Head of caudate nucleus (tissue), 42 donors: ENCODE measurements at regions of chr14 and their contacts with region 1.

Region 1: DNA sequence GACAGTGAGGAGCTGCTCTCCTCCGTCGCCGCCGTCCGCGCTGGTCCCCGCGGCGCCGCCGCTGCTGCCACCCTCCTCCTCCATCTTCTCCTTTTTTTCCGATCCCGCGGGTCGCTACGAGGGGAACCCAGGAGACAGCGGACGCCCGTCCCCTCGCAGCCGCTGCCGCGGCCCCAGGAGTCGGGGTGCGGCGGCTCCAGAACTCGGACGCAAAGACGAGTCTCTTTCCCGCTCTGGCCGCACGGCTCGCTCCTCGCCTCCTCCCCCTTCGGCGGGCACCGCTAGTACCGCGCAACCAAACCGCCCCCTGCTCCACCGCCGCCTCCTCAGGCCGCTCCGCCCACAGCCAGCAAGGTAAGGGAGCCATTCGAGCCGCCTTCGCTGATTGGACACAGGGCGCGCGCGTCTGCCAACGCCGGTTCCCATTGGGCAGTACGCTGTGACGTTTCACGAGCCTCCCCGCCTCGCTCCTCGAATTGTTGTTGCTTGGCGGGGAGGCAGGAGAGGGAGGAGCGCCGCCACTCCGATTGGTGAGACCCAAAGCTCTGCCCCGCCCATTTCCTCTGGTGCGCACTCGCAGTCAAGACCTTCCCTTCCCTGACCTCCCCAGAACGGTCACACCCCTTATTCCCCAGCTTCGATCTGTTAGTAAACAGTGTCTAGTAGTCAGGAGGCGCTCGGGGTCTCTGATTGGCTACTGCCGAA is at the start of gene RPS6KA5:
- DNase-seq: peak; percentile 99 to 100 (median 100)

Region 2: DNA sequence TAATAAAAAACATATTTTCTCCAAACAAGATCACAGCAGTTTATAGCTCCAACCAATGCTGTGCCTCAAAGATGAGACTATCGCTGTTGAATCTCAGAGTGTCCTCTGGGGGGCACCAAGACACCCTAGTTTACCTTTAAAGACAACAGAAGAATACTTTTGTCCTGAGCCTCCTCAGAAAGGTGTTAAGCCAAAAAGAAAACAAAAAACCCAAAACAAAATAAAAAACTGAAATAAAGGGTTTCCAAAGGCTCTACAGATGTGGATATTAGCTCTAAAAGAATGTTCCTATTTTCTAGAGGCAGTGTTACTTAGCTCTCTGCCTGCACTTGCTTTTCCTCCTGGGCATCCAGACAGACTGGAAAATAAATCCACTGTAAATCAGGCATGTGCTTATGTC is 157.4 kb before region 1 on chr14:
- intact Hi-C with region 1: loop called (anchors 10 kb)
- DNase-seq: peak in 41 of 42 donors; percentile 27 to 88 (median 73)

Region 3: GRCh38 chr14:90999299-90999698 is 61.2 kb before region 1 on chr14:
- intact Hi-C with region 1: loop called (anchors 10 kb)
- DNase-seq: peak in 38 of 42 donors; percentile 5 to 81 (median 50)

Region 4: DNA sequence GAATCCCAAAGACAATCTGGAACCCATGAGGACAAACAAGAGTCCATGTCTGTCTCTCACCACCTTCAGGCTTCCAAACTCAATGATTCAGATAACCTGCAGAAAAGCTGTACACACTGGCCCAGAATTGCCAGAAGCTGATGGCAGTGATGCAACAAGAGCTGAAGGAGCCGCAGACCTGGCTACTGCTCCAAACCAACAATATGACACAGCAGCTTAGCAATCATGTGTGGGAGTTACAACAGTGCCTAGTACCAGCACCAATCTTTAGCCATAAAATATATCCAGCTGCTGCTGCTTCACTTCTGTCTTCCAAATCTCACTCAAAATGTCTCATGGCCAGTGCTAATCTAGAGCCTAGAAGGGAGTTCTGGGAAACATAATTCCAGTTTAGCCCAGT is 22.1 kb before region 1 on chr14:
- intact Hi-C with region 1: no loop called
- DNase-seq: no peak

Region 5: DNA sequence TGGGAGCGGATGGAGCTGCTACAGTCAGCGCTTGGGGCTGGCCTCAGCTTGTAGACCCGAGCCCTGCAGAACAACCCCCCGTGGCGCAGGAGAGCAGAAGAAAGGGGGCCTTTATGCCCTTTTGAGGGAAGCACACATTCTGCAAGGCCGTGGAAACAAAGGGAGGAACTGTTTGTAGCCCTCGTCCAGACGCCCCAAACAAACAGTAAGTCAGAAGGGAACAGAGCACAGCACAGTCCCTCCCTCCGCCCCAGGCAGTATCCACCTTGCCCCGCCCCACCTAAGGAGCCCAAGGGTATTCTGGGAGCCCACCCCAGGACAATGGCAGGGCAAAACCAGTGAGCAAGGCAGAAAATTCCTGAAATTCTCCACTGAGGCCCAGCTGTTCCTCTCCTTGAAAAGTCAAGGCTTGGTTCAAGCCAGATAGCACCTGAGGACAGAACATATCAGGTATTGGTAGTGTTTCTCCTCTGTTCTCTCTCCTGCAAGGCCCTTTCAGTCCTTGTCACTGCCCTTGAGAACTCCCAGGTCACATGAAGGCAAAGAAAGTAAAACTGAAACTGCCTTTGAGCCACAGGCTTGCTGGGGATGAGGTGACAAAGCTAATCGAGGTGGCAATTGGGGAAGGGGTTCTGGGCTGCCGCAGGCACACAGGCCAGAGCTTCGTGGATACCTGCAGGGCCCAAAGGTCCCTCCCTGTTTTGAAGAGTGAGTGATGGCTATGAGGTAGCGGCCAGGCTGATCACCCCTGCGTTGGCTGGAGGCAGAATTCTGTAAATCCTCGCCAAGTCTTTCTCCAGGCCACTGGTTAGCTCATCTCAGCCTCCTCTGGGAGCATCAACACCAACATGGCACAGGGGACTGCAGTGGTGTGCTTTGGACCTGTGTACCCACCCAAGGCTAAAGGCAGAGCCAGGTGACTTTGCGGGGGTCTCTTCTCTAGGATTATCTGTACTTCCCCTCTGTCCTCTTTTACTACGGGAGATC is 53.9 kb after region 1 on chr14:
- intact Hi-C with region 1: loop called (anchors 5 kb)
- DNase-seq: peak; percentile 85 to 98 (median 95)

Region 6: DNA sequence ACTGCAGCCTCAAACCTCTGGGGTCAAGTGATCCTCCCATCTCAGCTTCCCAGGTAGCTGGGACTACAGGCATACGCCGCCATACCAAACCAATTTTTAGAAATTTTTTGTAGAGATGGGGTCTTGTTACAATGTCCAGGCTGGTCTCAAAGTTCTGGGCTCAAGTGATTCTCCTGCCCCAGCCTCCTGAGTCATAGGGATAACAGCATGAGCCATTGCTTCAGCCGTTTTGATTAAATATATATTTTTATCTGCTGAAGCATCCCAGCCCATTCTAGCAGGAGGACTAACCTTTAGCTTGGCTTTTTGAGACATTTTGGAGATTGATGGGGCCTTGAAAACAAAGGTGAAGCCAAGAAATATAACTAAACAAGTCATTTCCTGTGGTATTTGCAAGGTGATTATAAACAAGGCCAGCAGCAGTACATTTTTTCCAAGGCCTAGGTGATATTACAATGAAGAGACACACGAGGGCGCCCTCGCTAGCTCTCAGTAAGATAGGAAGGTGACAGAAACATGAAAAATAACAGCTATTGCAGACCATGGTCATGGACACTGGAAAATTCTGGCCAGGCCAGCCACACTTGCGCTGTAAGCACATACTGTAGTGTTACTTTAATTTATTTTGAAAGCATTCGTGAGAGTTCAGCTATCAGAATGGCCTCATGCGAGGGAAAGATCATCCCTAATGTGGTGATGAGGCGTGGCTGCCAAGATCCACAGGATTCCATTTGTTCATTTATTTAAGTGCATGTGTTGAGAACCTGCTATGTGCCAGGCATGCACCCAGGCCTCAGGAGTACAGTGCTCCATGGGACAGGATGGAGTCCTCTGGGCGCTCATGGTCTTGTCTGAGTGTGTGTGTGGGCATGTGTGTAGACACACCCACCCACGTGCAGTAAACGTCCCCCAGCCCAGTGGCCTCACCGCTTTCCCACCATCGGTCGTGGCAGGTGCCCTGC is 116.9 kb after region 1 on chr14:
- intact Hi-C with region 1: loop called (anchors 2 kb)
- DNase-seq: peak in 37 of 42 donors; percentile 27 to 80 (median 53)